H1 (cell line): ENCODE measurements at regions of chr1 and their contacts with region 1.

Region 1: DNA sequence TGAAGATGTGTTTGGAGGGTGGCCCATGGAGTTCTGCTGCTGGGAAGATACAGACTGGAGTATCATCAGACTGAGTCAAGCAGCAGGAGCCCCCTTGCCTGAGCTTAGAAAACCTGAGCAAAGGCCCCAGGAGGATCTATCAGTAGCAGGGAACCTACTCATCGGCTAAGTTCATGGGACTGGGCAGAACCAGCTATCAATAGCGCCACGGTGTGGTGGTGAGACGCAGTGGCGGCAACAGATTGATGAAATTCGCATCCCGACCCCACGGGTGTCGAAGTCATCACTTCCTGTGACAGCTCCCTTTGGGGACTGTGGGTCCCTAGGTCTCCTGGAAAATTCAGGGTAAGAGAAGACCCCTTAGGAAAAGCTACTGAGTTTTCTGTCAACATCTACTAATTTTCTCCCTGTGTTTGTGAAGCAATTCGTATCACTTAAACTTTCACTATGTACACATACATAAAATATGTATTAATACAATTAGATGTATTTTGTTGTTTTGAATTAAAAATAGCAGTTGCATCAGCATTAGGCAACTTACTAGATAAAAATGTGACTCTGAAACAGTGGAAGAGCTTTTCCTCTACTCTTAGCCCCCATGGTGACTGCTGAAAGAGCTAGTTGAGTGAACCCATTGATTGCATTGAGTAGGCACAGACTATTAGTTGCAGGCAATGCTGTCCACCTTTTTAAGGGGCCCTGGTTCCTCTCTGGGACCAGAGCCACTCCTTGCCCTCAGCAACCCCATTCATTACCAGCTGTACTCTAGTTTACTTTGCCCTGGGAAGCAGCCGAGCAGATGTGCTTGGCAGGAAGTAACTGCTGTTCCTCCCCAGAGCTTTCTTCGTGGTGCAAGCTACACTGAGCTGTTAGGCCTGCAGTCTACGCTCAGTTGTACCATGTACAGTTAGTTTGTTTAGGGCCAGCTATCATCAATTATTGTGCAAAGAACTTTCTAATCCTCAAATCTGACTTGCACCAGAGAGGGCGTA is 7.3 kb upstream of the CACNA1S start:
- DNase-seq: peak in 1 of 2 experiments; percentile 81
- H3K4me3 ChIP-seq: no peak overlapping the region
- H3K27ac ChIP-seq: no peak overlapping the region
- H3K4me1 ChIP-seq: peaks cover 0 to 3% (median 0%) of the 10 kb centered on the region in 4 experiments; a peak in 1 of 7 replicates
- H3K27me3 ChIP-seq: peaks cover 9 to 22% (median 17%) of the 10 kb centered on the region in 4 experiments
- CTCF ChIP-seq: peak; percentile 91 to 98 (median 98)
- EP300 ChIP-seq: no peak
- POLR2A ChIP-seq: no peak
- RAD21 ChIP-seq: peak; percentile 80 to 86

Region 2: DNA sequence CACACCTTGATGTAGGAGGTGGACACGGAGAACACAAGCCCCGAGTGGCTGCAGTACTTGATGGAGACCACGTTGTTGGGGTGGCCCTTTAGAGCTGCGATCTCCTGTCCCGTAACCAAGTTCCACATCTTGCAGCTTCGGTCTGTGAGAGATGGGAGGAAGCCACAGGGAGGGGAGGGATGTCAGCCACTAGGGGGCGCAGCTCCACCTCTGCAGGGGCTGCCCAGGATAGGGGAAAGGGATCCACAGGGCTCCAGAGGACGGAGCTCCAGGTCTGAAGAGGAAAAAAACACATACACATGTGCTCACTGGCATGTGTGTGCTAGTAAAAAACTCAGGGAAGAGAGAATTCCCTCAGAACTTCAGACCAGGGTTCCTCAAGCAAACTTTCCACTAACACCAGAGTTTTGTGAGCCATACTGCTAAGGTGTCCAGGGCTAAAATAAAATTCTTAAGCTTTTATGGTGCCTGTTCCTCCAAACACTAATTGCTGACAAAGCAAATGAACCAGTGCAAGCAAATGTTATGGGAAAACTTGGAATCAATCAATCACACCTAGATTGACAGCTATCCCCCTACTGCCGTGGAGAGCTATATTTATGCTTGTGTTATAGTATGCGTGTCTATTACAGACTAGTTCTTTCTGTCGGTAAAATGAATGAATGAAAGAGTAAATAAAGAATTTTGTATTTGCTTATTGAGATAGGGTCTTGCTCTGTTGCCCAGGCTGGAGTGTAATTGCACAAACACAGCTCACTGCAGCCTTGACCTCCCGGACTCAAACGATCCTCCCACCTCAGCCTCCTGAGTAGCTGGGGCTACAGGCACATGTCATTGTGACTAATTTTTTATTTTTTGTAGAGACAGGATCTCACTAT is 139.7 kb before region 1 on chr1:
- CTCF ChIA-PET with region 1: interaction called, 17 read pairs
- POLR2A ChIA-PET with region 1: no interaction called
- DNase-seq: peak; percentile 47 to 95
- H3K4me3 ChIP-seq: no peak overlapping the region
- H3K27ac ChIP-seq: no peak overlapping the region
- H3K4me1 ChIP-seq: no peaks in the 10 kb centered on the region
- H3K27me3 ChIP-seq: no peaks in the 10 kb centered on the region
- CTCF ChIP-seq: peak; percentile 90 to 98 (median 97)
- EP300 ChIP-seq: peak in 1 of 2 experiments; percentile 10; a peak in 1 of 3 replicates
- POLR2A ChIP-seq: no peak
- RAD21 ChIP-seq: peak; percentile 87 to 89

Region 3: DNA sequence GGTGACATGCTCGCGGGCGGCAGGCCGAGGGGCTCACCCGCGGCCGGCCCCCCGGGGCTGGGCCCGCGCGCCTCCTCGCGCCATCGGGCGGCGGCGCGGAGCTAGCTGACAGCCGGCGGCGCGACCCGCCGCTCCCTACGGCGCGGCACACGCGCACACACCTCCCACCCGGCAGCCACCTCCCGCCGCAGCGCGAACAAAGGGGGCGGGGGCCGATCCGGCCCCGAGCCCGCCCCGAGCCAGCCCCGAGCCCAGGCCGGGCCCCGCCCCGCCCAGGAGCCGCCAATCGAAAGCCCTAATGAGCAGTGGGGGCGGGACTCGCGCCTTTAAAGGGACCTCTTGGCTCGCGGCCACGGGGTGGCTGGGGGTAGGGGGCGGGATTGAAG is 96.0 kb before region 1 on chr1 and contains the start of gene KIF21B:
- CTCF ChIA-PET with region 1: interaction called, 18 read pairs
- POLR2A ChIA-PET with region 1: interaction called, 4 read pairs
- DNase-seq: peak in 1 of 2 experiments; percentile 92
- H3K4me3 ChIP-seq: peak within 1 kb of the TSS; percentile 64 to 84 (median 67)
- H3K27ac ChIP-seq: no peak within 1 kb of the TSS
- H3K4me1 ChIP-seq: peaks cover 22 to 49% (median 37%) of the 10 kb centered on the region in 4 experiments
- H3K27me3 ChIP-seq: peaks cover 0 to 5% (median under 1%) of the 10 kb centered on the region in 4 experiments; a peak in 2 of 7 replicates
- CTCF ChIP-seq: no peak
- EP300 ChIP-seq: no peak
- POLR2A ChIP-seq: no peak
- RAD21 ChIP-seq: no peak
- total RNA-seq, gene KIF21B: 26.5 and 27.2 TPM in 2 replicates

Region 4: DNA sequence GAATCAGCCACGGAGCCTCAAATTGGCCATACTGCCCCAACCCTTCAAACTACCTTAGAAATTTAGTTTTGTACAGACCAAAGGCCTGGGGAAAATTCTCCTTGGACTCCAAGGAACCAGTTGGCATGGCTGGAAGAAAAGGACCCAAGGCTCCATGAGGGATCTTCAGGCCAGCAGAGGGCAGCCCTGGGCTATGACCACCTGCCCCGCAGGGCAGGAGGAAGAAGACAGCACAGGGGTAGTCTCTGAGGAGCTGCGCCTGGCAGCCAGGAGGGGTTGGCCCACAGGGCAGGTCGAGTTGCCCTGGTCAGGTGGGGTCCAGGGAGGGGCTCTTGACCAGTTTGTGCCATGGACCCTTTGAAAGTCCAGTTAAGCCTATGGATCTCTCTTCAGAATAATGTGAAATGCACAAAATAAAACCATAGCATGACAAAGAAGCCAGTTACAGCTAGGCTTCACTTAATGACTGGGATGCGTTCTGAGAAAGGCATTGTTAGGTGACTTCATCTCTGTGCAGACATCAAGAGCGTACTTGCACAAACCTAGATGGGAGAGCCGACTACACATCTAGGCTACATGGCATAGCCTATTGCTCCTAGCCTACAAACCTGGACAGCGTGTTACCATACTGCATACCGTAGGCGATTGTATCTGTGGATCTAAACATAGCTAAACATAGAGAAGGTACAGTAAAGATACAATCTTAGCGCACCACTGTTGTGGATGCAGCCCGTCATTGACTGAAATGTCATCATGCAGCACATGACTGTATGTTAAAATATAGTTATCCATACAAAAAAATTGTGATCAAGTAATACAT is 33.4 kb before region 1 on chr1:
- CTCF ChIA-PET with region 1: interaction called, 343 read pairs
- POLR2A ChIA-PET with region 1: interaction called, 15 read pairs
- DNase-seq: peak; percentile 25 to 81
- H3K4me3 ChIP-seq: no peak overlapping the region
- H3K27ac ChIP-seq: no peak overlapping the region
- H3K4me1 ChIP-seq: no peaks in the 10 kb centered on the region
- H3K27me3 ChIP-seq: no peaks in the 10 kb centered on the region
- CTCF ChIP-seq: peak; percentile 71 to 97 (median 86)
- EP300 ChIP-seq: no peak
- POLR2A ChIP-seq: no peak
- RAD21 ChIP-seq: peak; percentile 88 to 94

Region 5: DNA sequence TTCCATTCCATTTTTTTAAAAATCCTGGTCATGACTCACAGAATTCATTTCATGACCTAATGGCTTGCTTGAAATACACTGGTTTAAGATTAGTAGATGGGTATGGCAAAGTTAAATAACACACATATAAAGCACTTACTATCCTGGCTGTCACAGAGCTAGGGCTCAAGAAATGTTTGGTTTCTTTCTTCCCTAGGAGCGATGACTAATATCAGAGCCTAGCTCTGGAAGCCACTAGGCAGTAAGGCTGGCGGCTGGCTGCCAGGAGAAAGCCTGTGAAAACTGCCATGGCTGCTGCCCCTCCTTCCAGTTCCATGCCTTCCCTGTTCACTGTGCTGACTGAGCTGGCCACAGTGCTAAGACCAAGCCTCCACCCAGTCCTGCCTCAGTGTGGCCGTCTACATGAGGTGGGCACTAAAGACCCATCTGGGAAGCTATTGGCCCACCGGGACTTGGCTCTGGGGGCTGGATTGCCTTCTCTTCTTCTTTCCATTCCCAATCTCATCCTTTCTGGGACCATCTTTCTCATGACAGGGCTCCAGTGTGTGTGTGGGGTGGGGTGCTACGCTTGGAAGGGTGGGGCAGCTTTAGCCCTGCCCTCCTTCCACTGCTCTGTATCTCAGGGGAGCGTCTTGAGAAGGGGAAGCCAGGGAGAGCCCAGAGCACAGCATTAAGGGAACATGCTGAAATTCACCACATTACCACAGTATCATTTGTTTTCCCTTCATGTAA is 18.2 kb after region 1 on chr1:
- CTCF ChIA-PET with region 1: interaction called, 17 read pairs
- POLR2A ChIA-PET with region 1: interaction called, 4 read pairs
- DNase-seq: no peak
- H3K4me3 ChIP-seq: no peak overlapping the region
- H3K27ac ChIP-seq: no peak overlapping the region
- H3K4me1 ChIP-seq: no peaks in the 10 kb centered on the region
- H3K27me3 ChIP-seq: no peaks in the 10 kb centered on the region
- CTCF ChIP-seq: no peak
- EP300 ChIP-seq: no peak
- POLR2A ChIP-seq: no peak
- RAD21 ChIP-seq: no peak

Region 6: GRCh38 chr1:201224666-201225370 is 105.3 kb after region 1 on chr1:
- CTCF ChIA-PET with region 1: interaction called, 10 read pairs
- POLR2A ChIA-PET with region 1: no interaction called
- DNase-seq: peak in 1 of 2 experiments; percentile 29
- H3K4me3 ChIP-seq: no peak overlapping the region
- H3K27ac ChIP-seq: no peak overlapping the region
- H3K4me1 ChIP-seq: no peaks in the 10 kb centered on the region
- H3K27me3 ChIP-seq: no peaks in the 10 kb centered on the region
- CTCF ChIP-seq: no peak
- EP300 ChIP-seq: no peak
- POLR2A ChIP-seq: no peak
- RAD21 ChIP-seq: no peak